GM10248 (cell line): ENCODE measurements at regions of chr10 and their contacts with region 1.

Region 1: DNA sequence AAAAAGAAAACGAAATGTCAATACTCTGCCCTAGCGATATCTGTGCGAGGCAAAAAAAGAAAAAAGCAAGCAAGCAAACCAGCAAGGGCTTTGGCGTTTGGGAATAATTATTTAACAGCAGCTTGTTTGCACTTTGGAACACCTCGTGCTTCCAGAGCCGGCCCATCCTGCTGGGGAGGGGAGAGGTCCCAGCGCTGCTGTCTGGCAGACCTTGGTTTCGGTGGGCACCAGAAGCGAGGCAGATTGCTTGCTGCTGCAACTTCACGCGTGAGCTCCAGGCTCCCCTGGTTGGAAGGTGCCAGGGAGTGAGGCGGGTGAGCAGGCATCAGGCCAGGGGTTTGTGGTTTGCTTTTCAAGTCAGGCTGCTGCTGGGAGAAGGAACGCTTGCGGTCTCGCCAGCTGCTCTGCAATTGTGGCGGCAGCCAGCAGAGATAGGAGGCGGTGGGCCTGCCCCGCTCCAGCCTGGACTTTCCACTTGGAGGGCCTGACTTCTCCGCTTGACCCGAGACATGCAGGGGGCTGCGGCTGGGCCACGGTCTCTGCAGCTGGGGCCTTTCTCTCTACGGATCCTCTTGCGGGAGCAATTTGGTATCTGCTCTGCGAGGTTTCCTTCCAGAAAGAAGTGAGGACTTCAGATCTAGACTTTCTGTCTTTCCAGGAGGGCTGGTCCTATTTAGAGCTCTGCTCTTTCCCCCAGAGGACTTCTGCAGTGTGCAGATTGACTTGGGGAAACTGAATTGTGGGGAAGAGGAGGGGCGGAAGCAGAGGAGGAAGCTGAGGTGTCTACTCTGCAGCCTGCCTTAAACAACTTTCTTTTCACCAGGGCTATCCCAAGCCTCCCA is 131.4 kb downstream of the PRPF18 start:
- DNase-seq: no peak
- CTCF ChIP-seq: no peak

Region 2: GRCh38 chr10:13707156-13707881 is 10.8 kb before region 1 on chr10:
- CTCF ChIA-PET with region 1: interaction called, 21 read pairs
- POLR2A ChIA-PET with region 1: no interaction called
- DNase-seq: peak; percentile 61
- CTCF ChIP-seq: no peak